Left cardiac atrium (tissue), 4 donors: ENCODE measurements at regions of chr17 and their contacts with region 1.

Region 1: GRCh38 chr17:33674685-33675084 is 381.6 kb upstream of the ASIC2 start:
- DNase-seq: peak; percentile 68
- ATAC-seq: peak; percentile 88 to 92

Region 2: GRCh38 chr17:33038740-33039139 is 635.9 kb before region 1 on chr17:
- intact Hi-C with region 1: loop called in 1 of 2 experiments (anchors 5 kb)
- DNase-seq: peak; percentile 55
- ATAC-seq: peak; percentile 34 to 85

Region 3: GRCh38 chr17:33511670-33512069 is 163.0 kb before region 1 on chr17:
- intact Hi-C with region 1: loop called in 1 of 2 experiments (anchors 10 kb)
- DNase-seq: no peak
- ATAC-seq: no peak

Region 4: DNA sequence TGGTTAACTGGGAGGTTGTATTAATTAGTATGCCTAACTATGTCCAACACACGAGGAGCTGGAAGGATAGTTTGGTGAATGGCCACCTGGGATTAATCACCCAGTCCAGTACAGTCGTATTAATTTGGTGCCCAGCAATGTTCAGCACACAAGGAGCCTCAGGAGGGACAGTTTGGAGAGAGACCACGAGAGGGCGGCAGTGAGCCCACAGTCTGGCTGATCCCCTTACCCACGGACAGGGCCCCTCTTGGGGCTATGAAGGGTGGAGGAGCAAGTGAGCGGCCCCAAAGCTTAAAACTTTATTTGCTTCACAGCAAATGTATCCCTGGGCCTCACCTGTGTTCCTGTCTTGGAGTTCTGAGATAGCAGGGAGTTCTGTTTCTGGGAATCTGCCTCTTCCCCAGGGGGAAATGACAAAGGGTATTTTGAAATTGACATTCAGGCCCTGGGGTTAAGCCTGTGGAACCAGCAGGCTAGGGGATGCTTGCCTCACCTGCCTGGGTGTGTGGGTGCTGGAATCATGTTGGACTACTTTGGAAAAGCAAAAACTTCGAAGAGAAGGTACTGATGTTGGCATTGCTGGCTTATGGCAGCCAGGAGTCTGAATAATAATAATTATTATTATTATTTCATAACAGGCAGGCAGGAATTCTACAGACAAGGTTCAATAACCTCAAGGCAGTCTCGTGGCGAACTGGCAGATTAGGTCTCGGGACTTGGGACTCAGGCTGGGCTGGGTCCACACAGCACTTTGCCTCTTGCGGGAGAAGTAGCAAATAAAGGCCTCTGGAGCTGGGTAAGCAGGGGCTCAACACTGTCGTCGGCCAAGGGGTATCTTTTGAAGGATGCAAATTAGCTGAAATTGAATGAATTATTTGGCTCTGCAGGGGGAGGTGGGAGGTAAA is 154.0 kb before region 1 on chr17:
- intact Hi-C with region 1: loop called (anchors 2 to 10 kb)
- DNase-seq: peak; percentile 52
- ATAC-seq: peak in 1 of 2 donors; percentile 64

Region 5: GRCh38 chr17:33623841-33624240 is 50.8 kb before region 1 on chr17:
- intact Hi-C with region 1: no loop called
- DNase-seq: no peak
- ATAC-seq: peak in 1 of 2 donors; percentile 44

Region 6: DNA sequence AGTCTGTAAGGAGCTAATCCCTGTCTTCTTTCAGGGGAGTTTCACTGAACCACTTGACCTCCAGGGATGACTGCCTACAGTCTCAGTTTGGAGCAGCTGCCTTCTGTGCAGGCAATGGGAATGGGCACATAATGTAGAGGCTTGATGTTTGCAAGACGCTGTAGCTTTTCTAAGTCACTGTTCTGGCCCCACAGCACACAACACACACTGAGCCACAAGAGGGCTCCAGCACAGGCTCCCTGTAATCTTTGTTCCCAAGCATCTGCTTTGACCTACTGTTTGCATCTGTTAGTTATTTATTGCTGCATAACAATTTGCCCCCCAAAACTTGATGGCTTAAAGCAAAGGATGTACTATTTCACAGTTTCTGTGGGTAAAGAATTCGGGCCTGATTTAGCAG is 37.4 kb after region 1 on chr17:
- intact Hi-C with region 1: no loop called
- DNase-seq: no peak
- ATAC-seq: no peak

Region 7: DNA sequence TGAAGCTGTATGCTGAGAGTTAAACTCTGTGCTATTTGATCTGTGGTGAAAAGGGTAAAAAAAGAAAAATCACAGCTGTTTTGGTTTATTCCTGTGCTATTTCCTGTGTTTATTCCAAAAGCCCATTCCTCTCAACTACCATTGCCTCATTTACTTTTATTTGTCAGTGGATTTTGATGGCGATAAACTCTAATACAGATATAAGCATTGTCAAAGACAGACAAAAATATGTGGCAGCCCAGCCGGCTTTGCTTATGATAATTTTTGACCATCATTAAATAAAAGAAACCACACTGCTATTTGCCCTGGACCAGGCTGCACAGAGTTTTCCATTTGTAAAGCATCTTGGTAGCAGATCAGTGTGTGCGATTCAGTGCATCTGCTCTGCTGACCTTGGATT is 92.0 kb after region 1 on chr17:
- intact Hi-C with region 1: no loop called
- DNase-seq: no peak
- ATAC-seq: no peak